ENCODE measurements at regions of chr6 and their contacts with region 1.

Region 1: GRCh38 chr6:116253505-116254296 is at the start of gene TSPYL4:
- DNase-seq: peak; percentile 94
- ATAC-seq: peak; percentile 98
- H3K4me3 Mint-ChIP-seq: no peak within 1 kb of the TSS
- H3K27ac Mint-ChIP-seq: no peak within 1 kb of the TSS
- H3K4me1 Mint-ChIP-seq: peaks cover 38% of the 10 kb centered on the region
- H3K27me3 Mint-ChIP-seq: no peaks in the 10 kb centered on the region
- CTCF ChIP-seq: no peak
- total RNA-seq, gene TSPYL4: 11.8 to 12.2 TPM

Region 2: GRCh38 chr6:115854866-115855665 is 398.6 kb before region 1 on chr6:
- CTCF ChIA-PET with region 1: no interaction called
- POLR2A ChIA-PET with region 1: no interaction called
- intact Hi-C with region 1: no loop called
- DNase-seq: no peak
- ATAC-seq: no peak
- H3K4me3 Mint-ChIP-seq: no peak overlapping the region
- H3K27ac Mint-ChIP-seq: no peak overlapping the region
- H3K4me1 Mint-ChIP-seq: no peaks in the 10 kb centered on the region
- H3K27me3 Mint-ChIP-seq: no peaks in the 10 kb centered on the region
- CTCF ChIP-seq: no peak

Region 3: DNA sequence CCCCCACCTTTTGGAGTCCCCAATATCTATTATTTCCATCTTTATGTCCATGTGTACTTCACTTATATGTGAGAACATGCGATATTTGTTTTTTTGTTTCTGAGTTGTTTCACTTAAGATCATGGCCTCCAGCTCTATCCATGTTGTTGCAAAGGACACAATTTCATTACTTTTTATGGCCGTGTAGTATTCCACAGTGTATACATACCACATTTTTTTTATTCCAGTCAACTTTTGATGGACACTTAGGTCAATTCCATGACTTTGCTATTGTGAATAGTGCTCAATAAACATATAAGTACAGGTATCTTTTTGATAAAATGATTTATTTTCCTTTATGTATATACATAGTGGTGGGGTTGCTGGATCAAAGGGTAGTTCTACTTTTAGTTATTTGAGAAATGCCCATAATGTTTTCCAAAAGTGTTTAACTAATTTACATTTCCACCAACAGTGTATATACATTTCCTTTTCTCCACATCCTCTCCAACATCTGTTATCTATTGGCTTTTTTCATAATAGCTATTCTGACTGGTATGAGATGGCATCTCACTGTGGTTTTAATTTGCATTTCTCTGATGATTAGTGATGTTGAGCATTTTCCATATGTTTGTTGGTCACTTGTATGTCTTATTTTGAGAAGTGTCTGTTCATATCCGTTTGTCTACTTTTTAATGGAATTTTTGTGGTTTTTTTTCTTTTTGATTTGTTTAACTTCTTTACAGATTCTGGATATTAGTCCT is 93.7 kb before region 1 on chr6:
- CTCF ChIA-PET with region 1: no interaction called
- POLR2A ChIA-PET with region 1: no interaction called
- intact Hi-C with region 1: no loop called
- DNase-seq: no peak
- ATAC-seq: no peak
- H3K4me3 Mint-ChIP-seq: no peak overlapping the region
- H3K27ac Mint-ChIP-seq: no peak overlapping the region
- H3K4me1 Mint-ChIP-seq: peaks cover 8% of the 10 kb centered on the region
- H3K27me3 Mint-ChIP-seq: no peaks in the 10 kb centered on the region
- CTCF ChIP-seq: no peak

Region 4: GRCh38 chr6:116217069-116217468 is 36.6 kb before region 1 on chr6:
- CTCF ChIA-PET with region 1: interaction called, 10 read pairs
- POLR2A ChIA-PET with region 1: interaction called, 3 read pairs
- intact Hi-C with region 1: no loop called
- DNase-seq: no peak
- ATAC-seq: peak; percentile 82
- H3K4me3 Mint-ChIP-seq: no peak overlapping the region
- H3K27ac Mint-ChIP-seq: peak overlapping the region; percentile 57
- H3K4me1 Mint-ChIP-seq: peaks cover 6% of the 10 kb centered on the region
- H3K27me3 Mint-ChIP-seq: no peaks in the 10 kb centered on the region
- CTCF ChIP-seq: peak; percentile 60

Region 5: GRCh38 chr6:116268589-116269293 is 15.0 kb after region 1 on chr6:
- CTCF ChIA-PET with region 1: interaction called, 14 read pairs
- POLR2A ChIA-PET with region 1: interaction called, 5 read pairs
- intact Hi-C with region 1: no loop called
- DNase-seq: no peak
- ATAC-seq: peak; percentile 68
- H3K4me3 Mint-ChIP-seq: no peak overlapping the region
- H3K27ac Mint-ChIP-seq: peak overlapping the region; percentile 43
- H3K4me1 Mint-ChIP-seq: peaks cover 33% of the 10 kb centered on the region
- H3K27me3 Mint-ChIP-seq: no peaks in the 10 kb centered on the region
- CTCF ChIP-seq: peak; percentile 66

Region 6: GRCh38 chr6:116363759-116364158 is 110.1 kb after region 1 on chr6:
- CTCF ChIA-PET with region 1: no interaction called
- POLR2A ChIA-PET with region 1: no interaction called
- intact Hi-C with region 1: no loop called
- DNase-seq: no peak
- ATAC-seq: no peak
- H3K4me3 Mint-ChIP-seq: no peak overlapping the region
- H3K27ac Mint-ChIP-seq: no peak overlapping the region
- H3K4me1 Mint-ChIP-seq: no peaks in the 10 kb centered on the region
- H3K27me3 Mint-ChIP-seq: no peaks in the 10 kb centered on the region
- CTCF ChIP-seq: no peak

Measured in activated CD8-positive, alpha-beta T cell treated with anti-CD3 and anti-CD28 coated beads for 36 hours (primary cell).